ENCODE measurements at regions of chr14 and their contacts with region 1.

Region 1: GRCh38 chr14:81269100-81269978 is 48.6 kb upstream of the GTF2A1 start:
- DNase-seq: no peak
- ATAC-seq: peak; percentile 72

Region 2: GRCh38 chr14:80117876-80118275 is 1151.5 kb before region 1 on chr14:
- intact Hi-C with region 1: no loop called
- DNase-seq: no peak
- ATAC-seq: no peak

Region 3: GRCh38 chr14:81453166-81453766 is 183.9 kb after region 1 on chr14:
- intact Hi-C with region 1: loop called (anchors 5 kb)
- DNase-seq: peak; percentile 70
- ATAC-seq: peak; percentile 42